Heart left ventricle (tissue), 16 donors: ENCODE measurements at regions of chr1 and their contacts with region 1.

Region 1: DNA sequence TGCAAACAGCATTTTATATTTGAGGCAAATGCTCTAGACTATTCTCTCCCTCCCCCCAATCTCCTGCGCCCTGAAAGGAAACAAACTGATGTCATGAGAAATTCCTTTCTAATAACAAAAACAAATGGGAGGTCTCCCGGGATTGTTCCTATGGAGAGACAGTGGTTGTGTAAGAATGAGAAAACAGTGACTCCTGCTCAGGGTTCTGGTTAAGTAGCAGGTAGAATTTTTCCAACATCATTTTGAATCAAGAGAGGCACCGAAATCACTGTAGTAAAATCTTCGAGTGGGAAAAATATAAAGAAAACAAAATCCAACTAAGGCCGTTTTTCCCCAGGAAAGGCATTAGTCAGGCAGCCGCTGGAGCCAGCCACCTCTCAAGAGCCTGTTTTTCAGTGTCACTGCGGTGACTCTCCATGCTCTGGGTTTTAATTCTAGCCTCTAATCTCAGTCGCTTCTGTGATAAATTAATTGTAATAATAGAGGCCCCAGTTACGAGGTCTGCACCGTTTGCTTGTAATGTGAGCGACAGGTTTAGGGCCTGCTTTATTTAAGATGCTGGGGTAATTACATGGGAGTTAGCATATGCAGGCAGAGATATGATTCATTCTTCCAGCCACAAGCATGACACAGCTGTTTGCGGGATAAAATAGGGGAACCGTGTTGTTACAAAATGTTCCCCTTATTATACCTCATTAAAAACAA is 80.3 kb downstream of the RNF220 start:
- DNase-seq: peak in 1 of 5 donors; percentile 38
- ATAC-seq: peak; percentile 54 to 90 (median 80)
- H3K4me3 ChIP-seq: peak overlapping the region in 1 of 12 donors; percentile 10
- H3K27ac ChIP-seq: peak overlapping the region in 11 of 12 donors; percentile 22 to 79 (median 69)
- H3K4me1 ChIP-seq: peaks cover 7 to 32% (median 21%) of the 10 kb centered on the region in 12 donors
- H3K27me3 ChIP-seq: no peaks in the 10 kb centered on the region
- CTCF ChIP-seq: no peak
- POLR2A ChIP-seq: no peak

Region 2: GRCh38 chr1:44405041-44405797 is 80.2 kb before region 1 on chr1 and contains the start of gene RNF220:
- intact Hi-C with region 1: loop called in 1 of 10 experiments (anchors 5 kb)
- DNase-seq: peak; percentile 55 to 74 (median 60)
- ATAC-seq: peak; percentile 82 to 84 (median 83)
- H3K4me3 ChIP-seq: peak within 1 kb of the TSS; percentile 24 to 66 (median 54)
- H3K27ac ChIP-seq: peak within 1 kb of the TSS in 7 of 12 donors; percentile 18 to 71 (median 46)
- H3K4me1 ChIP-seq: peaks cover 10 to 52% (median 27%) of the 10 kb centered on the region in 12 donors
- H3K27me3 ChIP-seq: peaks cover 35 to 94% (median 75%) of the 10 kb centered on the region in 9 donors
- CTCF ChIP-seq: peak in 4 of 12 donors; percentile 10 to 27 (median 16)
- POLR2A ChIP-seq: no peak
- total RNA-seq, gene RNF220: 55.5 to 108 (median 62.4) TPM

Region 3: GRCh38 chr1:44447051-44447810 is 38.1 kb before region 1 on chr1:
- intact Hi-C with region 1: no loop called
- DNase-seq: no peak
- ATAC-seq: no peak
- H3K4me3 ChIP-seq: no peak overlapping the region
- H3K27ac ChIP-seq: no peak overlapping the region
- H3K4me1 ChIP-seq: no peaks in the 10 kb centered on the region
- H3K27me3 ChIP-seq: no peaks in the 10 kb centered on the region
- CTCF ChIP-seq: no peak
- POLR2A ChIP-seq: no peak

Region 4: GRCh38 chr1:44543064-44543744 is 57.8 kb after region 1 on chr1:
- intact Hi-C with region 1: no loop called
- DNase-seq: no peak
- ATAC-seq: no peak
- H3K4me3 ChIP-seq: no peak overlapping the region
- H3K27ac ChIP-seq: no peak overlapping the region
- H3K4me1 ChIP-seq: peaks cover 0 to 7% (median 0%) of the 10 kb centered on the region in 12 donors
- H3K27me3 ChIP-seq: peaks cover 0 to 20% (median 5%) of the 10 kb centered on the region in 9 donors
- CTCF ChIP-seq: no peak
- POLR2A ChIP-seq: no peak